Panc1 (cell line): ENCODE measurements at regions of chrX and their contacts with region 1.

Region 1: GRCh38 chrX:103175944-103176753 is 38.8 kb upstream of the BEX4 start:
- DNase-seq: no peak
- ATAC-seq: peak; percentile 84
- H3K4me3 ChIP-seq: peak overlapping the region; percentile 7 to 38; a peak in 3 of 4 replicates
- H3K27ac ChIP-seq: no peak overlapping the region
- H3K4me1 ChIP-seq: no peaks in the 10 kb centered on the region
- H3K27me3 ChIP-seq: peaks cover 2% of the 10 kb centered on the region; the same call in 1 of the 2 replicates
- CTCF ChIP-seq: peak; percentile 86

Region 2: GRCh38 chrX:101642093-101642492 is 1534.1 kb before region 1 on chrX:
- CTCF ChIA-PET with region 1: no interaction called
- POLR2A ChIA-PET with region 1: interaction called, 11 read pairs
- in situ Hi-C with region 1: no loop called
- intact Hi-C with region 1: no loop called
- DNase-seq: no peak
- ATAC-seq: no peak
- H3K4me3 ChIP-seq: no peak overlapping the region
- H3K27ac ChIP-seq: no peak overlapping the region
- H3K4me1 ChIP-seq: no peaks in the 10 kb centered on the region
- H3K27me3 ChIP-seq: no peaks in the 10 kb centered on the region
- CTCF ChIP-seq: no peak

Region 3: DNA sequence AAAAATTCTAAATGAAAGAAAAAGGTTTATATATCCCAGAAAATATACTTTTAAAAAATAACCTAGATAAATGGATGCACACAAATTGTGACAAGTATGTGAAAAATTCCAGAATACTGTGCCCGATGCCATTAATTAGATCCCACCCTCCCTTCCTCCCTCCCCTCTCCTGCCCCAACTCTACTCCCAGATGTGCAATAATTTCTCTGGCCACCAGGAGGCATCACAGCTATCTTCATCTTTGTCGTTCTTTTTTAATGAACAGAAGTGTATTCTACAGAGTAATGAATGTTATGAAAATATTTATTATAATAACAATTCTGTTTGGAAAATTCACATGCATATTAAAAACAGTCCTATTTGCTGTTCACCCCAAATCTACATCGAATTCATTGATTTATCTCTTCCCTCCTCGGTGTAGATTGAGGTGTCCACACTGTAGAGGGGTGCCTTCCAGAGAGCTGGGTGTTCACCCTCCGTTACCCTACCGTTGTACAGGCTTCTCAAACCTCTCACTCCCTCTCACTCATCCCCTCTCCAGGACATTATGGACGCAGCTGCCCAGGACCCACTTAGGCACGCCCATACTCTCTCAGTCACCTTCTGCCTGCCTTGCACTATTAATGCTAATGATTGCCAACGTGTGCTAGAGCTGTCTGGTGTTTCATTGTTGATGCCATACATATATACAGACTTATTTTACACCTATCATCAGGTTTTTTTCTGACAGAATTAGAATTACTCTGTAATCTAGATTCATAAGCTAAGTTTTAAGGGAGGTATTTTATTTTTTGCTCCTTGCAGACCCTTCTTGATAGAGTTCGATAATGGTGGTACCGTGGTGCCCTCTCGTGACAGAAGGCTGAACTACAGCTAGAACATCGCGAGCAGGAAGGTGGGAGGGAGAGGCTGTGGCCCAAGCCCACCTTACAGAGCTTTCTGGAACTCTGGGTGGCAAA is 225.0 kb before region 1 on chrX:
- CTCF ChIA-PET with region 1: interaction called, 24 read pairs
- POLR2A ChIA-PET with region 1: no interaction called
- in situ Hi-C with region 1: no loop called
- intact Hi-C with region 1: loop called (anchors 1 kb)
- DNase-seq: peak; percentile 38
- ATAC-seq: peak; percentile 93
- H3K4me3 ChIP-seq: peak overlapping the region; percentile 21 to 50
- H3K27ac ChIP-seq: no peak overlapping the region
- H3K4me1 ChIP-seq: no peaks in the 10 kb centered on the region
- H3K27me3 ChIP-seq: no peaks in the 10 kb centered on the region
- CTCF ChIP-seq: peak; percentile 77